Right lobe of liver (tissue), 6 donors: ENCODE measurements at regions of chr1 and their contacts with region 1.

Region 1: GRCh38 chr1:164673584-164674214 is 114.7 kb downstream of the PBX1 start:
- DNase-seq: no peak
- ATAC-seq: peak in 2 of 4 donors; percentile 34 to 41
- H3K4me3 ChIP-seq: no peak overlapping the region
- H3K27ac ChIP-seq: no peak overlapping the region
- H3K4me1 ChIP-seq: peaks cover 0 to 10% (median 0%) of the 10 kb centered on the region in 4 donors
- H3K27me3 ChIP-seq: no peaks in the 10 kb centered on the region
- CTCF ChIP-seq: peak; percentile 5 to 47 (median 31)
- POLR2A ChIP-seq: no peak

Region 2: GRCh38 chr1:164576291-164577271 is 97.1 kb before region 1 on chr1:
- intact Hi-C with region 1: no loop called
- DNase-seq: no peak
- ATAC-seq: peak in 2 of 4 donors; percentile 22 to 45
- H3K4me3 ChIP-seq: no peak overlapping the region
- H3K27ac ChIP-seq: no peak overlapping the region
- H3K4me1 ChIP-seq: no peaks in the 10 kb centered on the region
- H3K27me3 ChIP-seq: no peaks in the 10 kb centered on the region
- CTCF ChIP-seq: no peak
- POLR2A ChIP-seq: no peak

Region 3: DNA sequence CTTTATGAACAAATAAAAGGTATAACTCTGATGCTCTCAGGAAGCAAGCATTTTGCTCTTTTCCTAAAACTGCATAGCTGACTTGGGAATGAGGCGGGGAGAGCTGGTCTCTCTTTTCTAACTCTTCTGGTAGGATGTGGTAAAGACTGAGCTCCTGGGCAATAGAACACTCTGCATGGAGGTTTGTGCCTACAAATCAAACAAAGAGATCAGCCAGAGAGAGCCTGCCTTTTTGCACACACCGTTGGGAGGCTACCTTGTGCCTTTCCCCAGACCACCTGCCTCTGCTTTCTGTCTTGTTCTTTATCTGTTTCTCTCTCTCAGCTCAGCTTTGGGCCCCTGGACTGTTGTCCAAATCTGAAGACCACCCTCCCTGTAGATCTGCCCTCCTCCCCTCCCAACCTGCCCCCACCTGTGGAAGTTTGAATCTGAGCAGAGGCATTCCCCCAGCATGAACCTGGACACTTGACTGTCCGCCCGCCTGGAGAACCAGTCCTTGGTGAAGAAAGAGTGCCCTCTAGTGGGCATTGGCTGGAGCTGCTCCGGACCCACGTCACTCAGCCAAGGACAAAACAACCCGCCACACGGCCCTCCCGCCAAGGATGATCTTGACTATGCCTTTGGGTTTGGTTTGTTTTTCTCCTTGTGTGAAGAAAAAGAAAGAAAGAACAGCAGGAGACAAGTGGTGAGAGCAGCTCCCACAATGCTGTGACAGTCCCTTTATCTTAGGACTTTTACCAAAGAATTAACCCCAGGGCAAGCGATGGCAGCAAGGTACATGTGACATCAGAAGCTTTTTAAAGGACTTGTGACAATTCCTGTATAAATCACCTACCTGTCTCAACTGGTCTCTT is 113.5 kb after region 1 on chr1:
- intact Hi-C with region 1: loop called in 1 of 2 experiments (anchors 10 kb)
- DNase-seq: peak; percentile 77 to 81 (median 78)
- ATAC-seq: peak; percentile 97 to 99 (median 99)
- H3K4me3 ChIP-seq: no peak overlapping the region
- H3K27ac ChIP-seq: no peak overlapping the region
- H3K4me1 ChIP-seq: no peaks in the 10 kb centered on the region
- H3K27me3 ChIP-seq: no peaks in the 10 kb centered on the region
- CTCF ChIP-seq: peak; percentile 84 to 89 (median 88)
- POLR2A ChIP-seq: no peak

Region 4: DNA sequence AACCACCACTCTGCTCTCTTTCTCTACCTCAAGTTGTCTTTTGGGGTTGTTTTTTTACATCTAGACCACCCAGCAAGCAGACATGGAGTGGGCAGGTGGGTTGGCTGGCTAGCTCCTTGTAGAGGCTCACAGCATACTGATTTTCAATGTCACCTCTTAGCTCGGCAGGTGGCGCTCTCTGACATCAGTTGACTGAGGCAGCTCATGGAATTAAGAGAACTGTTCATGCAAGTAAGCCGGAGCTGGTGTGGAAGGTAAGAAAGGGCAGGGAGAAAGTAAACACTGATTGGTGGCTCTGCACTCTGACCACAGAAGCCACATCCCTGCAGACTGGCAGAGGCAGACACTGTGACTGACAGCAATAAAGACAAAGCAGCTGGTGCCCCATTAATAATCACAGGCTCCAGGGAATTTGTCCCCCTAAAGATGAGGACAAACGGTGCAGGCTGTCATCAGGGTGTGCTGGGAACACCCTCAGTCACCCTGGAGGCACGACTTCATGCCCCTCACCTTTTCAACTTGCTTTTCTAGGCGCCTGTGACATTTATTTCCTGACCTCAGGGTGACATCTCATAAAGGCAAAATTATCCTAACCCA is 456.0 kb after region 1 on chr1:
- intact Hi-C with region 1: no loop called
- DNase-seq: peak; percentile 71 to 78 (median 75)
- ATAC-seq: peak; percentile 87 to 95 (median 92)
- H3K4me3 ChIP-seq: no peak overlapping the region
- H3K27ac ChIP-seq: no peak overlapping the region
- H3K4me1 ChIP-seq: no peaks in the 10 kb centered on the region
- H3K27me3 ChIP-seq: peaks cover 0 to 8% of the 10 kb centered on the region in 2 donors
- CTCF ChIP-seq: peak; percentile 47 to 74 (median 54)
- POLR2A ChIP-seq: no peak